ENCODE measurements at regions of chr2 and their contacts with region 1.

Region 1: DNA sequence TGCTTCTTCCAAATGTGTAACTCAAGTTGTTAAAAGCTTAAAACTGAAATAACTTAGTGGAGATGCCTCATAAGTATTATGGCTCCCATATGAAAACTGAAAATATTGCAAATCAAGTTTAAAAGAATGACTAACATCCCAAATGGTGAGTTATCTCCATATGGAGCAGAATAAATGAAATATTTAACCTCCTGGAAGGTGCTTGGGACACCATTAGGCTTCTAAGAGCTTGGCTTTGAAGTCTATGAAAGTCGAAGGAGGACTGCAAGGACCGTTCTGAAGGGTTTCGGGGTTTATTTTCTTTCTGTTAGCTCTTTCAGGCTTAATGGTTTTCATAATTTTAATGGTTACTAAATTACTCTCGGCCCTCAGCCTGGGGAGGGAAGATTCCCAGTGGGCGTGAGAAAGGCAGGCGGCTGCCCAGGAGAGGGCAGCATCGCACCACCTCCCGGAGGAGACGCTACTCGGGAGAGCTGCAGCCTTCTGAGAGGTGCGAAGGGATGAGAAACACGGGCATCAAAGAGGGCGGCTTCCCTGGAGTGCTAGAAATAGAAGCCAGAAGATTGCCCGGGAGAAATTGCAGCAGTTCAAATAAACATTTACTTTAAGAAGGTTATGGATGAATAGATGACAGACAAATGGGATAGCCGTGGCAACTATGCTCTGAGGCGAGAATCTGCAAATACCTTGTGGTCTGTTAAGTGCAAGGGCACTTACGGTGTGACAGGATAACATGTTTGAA is 43.1 kb downstream of the MAP3K19 start:
- DNase-seq: peak; percentile 85

Region 2: GRCh38 chr2:134692499-134692898 is 311.7 kb before region 1 on chr2:
- CTCF ChIA-PET with region 1: no interaction called
- POLR2A ChIA-PET with region 1: no interaction called
- DNase-seq: no peak

Region 3: DNA sequence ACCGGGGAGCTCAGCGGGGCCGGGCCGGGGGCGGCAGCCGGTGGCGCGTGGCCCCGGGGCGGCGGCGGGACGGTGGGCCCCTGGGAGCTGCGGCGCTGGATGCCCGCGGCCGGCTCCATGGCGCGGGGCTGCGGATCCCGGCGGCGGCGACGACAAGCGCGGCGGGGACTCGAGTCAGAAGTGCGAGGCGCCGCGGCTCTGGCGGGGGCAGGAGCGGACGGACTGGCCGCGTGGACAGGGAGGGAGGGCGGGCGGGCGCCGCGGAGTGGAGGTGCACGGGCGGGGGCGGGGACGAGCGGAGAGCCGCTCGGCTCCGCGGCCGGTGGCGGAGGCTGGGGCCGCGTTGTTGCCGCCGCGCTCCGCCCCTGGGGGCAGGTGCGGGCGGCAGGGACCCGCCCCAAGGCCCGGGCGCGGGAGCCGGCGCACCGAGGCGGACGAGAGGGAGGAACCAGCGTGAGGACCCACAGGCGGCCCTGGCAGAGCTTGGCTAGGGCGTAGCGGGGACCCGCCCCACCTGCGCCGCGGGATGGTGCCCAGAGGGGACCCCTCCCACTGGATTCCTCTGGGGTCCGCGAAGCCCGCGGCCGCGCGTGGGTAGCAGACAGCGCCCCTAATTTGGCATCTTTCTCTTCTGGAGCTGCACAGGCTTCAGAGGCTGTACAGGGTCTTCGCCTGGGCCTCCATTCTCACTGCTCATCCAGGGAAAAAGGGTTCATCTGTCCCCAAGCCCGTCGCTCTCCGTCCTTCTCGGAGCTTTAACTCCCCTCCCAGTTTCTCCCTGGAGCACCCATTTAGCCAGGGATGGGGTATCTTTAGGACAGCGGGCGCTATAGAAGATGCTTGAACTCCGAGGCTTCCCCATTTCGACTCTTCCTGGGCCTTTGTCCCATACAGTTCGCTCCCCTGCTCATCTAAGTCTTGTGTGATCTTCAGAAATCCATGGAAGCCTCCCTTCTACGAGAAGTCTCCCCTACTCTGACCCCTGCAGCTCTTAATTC is 285.1 kb before region 1 on chr2 and contains the start of gene TMEM163:
- CTCF ChIA-PET with region 1: no interaction called
- POLR2A ChIA-PET with region 1: no interaction called
- DNase-seq: peak; percentile 70

Region 4: DNA sequence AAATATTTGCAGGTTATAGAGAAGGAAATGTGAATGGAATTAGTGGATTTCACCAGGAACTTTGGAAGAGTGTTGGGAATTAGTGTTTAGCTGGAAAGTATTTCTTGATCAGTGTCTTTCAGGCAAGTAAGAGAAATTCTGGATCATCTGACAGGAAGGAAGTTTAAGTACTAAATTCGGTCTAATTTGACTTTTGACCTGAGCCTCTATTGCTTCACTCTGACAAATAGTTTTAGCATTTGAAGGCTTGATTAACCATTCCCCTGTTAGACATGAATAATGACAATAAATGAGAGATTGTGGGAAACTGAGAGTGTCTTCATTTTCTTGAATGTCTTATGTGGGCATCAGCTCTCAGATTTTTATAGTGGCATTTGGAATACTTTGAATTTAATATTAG is 69.5 kb before region 1 on chr2:
- CTCF ChIA-PET with region 1: no interaction called
- POLR2A ChIA-PET with region 1: no interaction called
- DNase-seq: no peak

Region 5: GRCh38 chr2:134988994-134989605 is 15.1 kb before region 1 on chr2:
- CTCF ChIA-PET with region 1: interaction called, 18 read pairs
- POLR2A ChIA-PET with region 1: no interaction called
- DNase-seq: peak; percentile 31

Region 6: DNA sequence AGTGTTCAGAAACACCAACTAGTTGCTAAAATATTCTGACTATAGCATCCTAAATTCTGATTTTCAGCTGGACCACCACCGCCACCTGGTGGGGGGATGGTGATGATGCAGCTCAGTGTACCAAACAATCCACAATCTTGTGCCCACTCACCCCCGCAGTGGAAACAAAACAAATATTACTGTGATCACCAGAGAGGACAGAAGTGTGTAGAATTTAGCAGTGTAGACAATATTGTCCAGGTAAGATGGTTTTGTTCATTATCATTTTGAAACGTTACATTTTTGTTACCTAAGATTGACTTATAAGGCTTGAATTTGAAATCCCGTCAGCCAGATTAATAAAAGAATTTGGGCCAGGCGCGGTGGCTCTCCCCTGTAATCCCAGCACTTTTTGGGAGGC is 705.8 kb after region 1 on chr2:
- CTCF ChIA-PET with region 1: interaction called, 10 read pairs
- POLR2A ChIA-PET with region 1: no interaction called
- DNase-seq: peak; percentile 66